Testis (tissue), 5 donors: ENCODE measurements at regions of chr2 and their contacts with region 1.

Region 1: GRCh38 chr2:1546023-1546591 is 132.8 kb downstream of the TPO start:
- DNase-seq: peak; percentile 57
- H3K4me3 ChIP-seq: no peak overlapping the region
- H3K27ac ChIP-seq: no peak overlapping the region
- H3K4me1 ChIP-seq: no peaks in the 10 kb centered on the region
- H3K27me3 ChIP-seq: no peaks in the 10 kb centered on the region
- CTCF ChIP-seq: peak; percentile 77 to 84 (median 80)
- POLR2A ChIP-seq: no peak

Region 2: GRCh38 chr2:516944-517343 is 1029.2 kb before region 1 on chr2:
- intact Hi-C with region 1: no loop called
- DNase-seq: no peak
- H3K4me3 ChIP-seq: no peak overlapping the region
- H3K27ac ChIP-seq: no peak overlapping the region
- H3K4me1 ChIP-seq: no peaks in the 10 kb centered on the region
- H3K27me3 ChIP-seq: no peaks in the 10 kb centered on the region
- CTCF ChIP-seq: no peak
- POLR2A ChIP-seq: no peak

Region 3: DNA sequence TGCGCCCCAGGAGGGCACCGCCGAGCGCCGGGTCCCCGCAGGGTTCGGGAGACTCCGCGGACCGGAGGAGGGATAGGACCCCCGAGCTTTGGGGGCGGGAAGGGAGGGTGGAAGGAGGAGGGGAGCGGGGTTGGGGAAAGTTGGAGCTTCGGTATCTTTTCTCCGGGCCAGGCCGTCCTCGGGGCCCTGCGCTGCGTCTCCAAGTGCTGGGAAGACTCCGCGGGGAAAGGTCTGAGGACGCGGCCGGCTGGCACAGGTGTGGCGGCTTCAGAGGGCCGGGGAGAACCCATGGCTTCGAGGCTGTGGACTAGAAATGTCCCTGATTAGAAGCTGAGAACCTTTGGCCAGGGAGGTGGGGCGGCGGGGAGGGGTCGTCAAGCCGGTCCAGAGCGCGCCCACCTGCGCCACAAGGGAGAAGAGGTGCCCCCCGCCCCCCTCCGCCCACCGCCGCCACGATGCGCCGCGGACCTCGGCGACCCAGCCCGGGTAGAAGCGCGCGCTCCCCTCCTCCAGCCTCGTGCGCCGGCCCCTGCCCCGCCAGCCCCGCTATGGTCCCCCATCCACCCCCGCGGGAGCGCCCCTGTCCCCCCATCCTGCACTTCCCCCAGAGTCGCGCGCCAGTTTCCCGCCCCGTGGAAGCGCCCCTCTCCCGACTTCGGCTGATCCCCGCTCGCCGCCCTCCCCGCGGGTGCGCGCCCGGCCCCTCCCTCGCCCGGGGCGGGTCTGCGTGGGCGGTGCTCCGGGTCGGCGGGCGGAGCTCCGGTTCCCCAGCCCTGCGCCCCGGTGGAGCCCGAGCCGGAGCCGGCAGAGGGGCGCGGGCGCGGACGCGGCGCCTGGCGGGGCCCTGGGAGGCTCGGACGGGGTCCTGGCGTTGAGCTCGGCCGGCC is 595.8 kb before region 1 on chr2 and contains the start of gene SNTG2:
- intact Hi-C with region 1: loop called (anchors 10 kb)
- DNase-seq: peak; percentile 53
- H3K4me3 ChIP-seq: peak within 1 kb of the TSS; percentile 60 to 70
- H3K27ac ChIP-seq: peak within 1 kb of the TSS; percentile 28 to 37
- H3K4me1 ChIP-seq: peaks cover 8% of the 10 kb centered on the region
- H3K27me3 ChIP-seq: no peaks in the 10 kb centered on the region
- CTCF ChIP-seq: no peak
- POLR2A ChIP-seq: no peak
- total RNA-seq, gene SNTG2: 8.7 to 10.2 TPM

Region 4: GRCh38 chr2:1781271-1782080 is 235.4 kb after region 1 on chr2:
- intact Hi-C with region 1: no loop called
- DNase-seq: no peak
- H3K4me3 ChIP-seq: no peak overlapping the region
- H3K27ac ChIP-seq: no peak overlapping the region
- H3K4me1 ChIP-seq: no peaks in the 10 kb centered on the region
- H3K27me3 ChIP-seq: no peaks in the 10 kb centered on the region
- CTCF ChIP-seq: no peak
- POLR2A ChIP-seq: no peak